ENCODE measurements at regions of chr18 and their contacts with region 1.

Region 1: DNA sequence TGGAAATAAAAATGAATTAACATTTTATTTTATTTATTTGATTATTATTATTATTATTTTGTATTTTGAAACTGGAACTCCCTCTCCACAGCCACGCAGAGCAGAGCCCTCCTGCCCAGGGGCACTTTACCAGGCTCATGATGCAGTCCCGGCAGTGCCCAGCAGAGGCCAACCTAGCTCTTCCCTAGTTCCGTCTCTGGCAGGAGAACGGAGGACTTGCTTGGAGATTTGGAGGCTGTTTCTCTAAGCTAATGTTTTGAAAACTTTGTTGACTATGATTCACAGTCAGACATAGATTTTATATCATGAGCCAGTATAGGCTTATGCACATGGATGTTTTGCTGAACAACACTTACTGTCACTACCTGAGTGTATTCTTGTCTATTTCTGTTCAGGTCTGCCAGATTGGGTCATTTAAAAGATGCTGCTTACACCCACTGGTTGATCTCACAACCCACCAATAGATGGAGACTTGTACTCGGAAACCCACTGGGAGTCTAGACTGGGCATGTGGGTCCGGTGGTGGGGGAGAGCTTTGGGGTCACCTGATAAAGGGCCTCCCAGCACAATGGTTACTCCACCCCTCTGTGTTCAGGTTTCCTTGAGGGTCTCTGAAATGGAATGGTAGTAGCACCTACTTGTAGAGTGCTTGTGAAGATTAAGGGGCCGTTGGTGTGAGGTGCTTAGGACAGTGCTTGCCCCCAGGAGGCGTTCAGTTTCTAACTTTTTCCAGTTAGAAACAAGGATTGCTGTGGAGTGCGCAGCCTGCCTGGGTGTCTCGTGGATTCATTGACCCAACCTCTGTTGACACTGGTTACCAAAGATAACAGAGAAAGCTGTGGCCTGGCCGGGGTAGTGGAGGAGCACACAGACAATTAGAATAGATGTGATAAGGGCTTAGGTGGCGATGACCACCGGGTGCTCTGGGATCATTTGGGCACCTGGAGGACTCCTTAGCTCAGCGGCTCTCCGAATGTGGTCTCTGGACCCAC is 177.3 kb downstream of the HAUS1 start:
- DNase-seq: peak in 4 of 6 donors; percentile 27 to 74 (median 54)
- ATAC-seq: peak; percentile 75 to 96 (median 95)
- H3K4me3 ChIP-seq: no peak overlapping the region
- H3K27ac ChIP-seq: no peak overlapping the region
- H3K4me1 ChIP-seq: no peaks in the 10 kb centered on the region
- H3K27me3 ChIP-seq: no peaks in the 10 kb centered on the region
- CTCF ChIP-seq: peak; percentile 59 to 88 (median 76)

Region 2: DNA sequence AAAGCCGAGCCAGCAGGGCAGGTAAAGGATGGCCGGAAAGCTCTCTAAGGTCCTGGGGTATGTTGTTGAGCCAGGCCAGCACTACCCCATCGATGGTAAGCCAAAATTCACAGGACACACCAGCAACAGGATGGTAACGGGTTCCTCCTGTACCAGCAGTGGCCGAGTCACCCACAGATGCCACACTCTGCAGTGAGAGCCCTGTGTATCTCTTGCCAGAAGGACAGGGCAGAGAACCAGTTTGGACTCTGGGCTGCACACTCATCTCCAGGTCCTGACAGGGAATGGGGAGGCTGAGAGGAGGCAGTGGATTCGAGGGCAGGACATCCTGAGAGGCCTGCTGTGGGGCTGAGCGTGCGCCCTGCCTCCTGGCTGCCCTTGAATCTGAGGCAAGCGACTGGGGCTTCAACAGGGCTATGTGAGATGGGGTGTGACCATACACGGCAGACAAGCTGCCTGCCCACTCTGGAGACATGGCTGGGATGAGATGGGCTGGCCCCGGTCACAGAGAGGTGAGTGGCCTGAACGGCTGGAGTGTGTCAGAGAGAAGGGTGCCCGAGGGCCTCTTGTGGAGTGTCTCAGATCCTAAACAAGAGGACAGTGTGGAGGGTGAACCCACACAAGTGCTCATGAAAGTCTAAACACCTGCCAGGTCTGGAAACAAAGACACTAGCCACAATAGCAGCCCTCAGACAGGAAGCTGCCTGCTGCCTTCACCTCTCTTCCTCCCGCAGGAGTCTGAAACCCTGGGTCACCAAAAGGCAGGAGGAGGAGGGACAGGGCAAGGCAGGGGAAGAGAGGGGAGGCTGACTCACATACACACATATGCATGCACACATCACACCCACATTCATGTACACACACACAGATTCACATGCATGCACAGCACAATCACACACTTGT is 193.3 kb after region 1 on chr18:
- intact Hi-C with region 1: loop called in 1 of 3 experiments (anchors 10 kb)
- DNase-seq: no peak
- ATAC-seq: no peak
- H3K4me3 ChIP-seq: no peak overlapping the region
- H3K27ac ChIP-seq: no peak overlapping the region
- H3K4me1 ChIP-seq: no peaks in the 10 kb centered on the region
- H3K27me3 ChIP-seq: no peaks in the 10 kb centered on the region
- CTCF ChIP-seq: no peak

Region 3: DNA sequence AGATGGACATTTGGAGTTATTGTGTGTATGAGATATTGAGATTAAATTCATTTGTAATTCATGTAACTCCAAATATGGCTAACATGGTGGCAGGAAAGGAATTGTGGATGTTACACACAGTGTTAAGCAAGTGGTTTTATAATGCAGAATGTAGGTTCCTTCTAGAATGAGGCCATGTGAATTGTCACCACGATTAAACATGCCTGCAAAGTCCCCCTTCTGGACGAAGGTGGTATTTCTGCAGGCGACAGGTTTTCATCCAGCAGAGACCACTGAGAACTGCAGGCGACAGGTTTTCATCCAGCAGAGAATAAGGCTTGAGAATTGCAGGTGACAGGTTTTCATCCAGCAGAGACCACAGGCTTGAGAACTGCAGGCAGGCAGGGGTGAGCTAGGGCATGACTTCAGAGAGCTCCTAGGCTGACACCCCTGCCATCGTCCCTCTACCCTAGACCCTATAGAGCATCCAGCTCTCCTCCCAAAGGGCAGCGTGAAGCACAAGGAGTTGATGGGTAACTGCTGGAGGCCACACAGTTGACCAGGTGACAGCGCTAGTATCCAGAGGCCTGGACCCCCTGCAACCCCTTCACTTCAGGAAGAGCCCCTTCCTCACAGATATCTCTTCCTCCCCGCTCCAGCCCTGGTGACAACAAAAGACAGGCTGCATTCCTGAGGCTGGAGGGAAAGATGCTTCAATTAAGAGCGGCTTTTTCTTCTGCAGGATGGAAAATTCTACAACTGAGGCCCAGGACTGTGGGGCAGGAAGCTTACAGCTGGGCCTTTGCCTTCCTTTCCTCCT is 199.8 kb after region 1 on chr18:
- intact Hi-C with region 1: loop called in 2 of 3 experiments (anchors 10 kb)
- DNase-seq: peak in 2 of 6 donors; percentile 6 to 45
- ATAC-seq: peak in 3 of 4 donors; percentile 56 to 70 (median 61)
- H3K4me3 ChIP-seq: no peak overlapping the region
- H3K27ac ChIP-seq: no peak overlapping the region
- H3K4me1 ChIP-seq: no peaks in the 10 kb centered on the region
- H3K27me3 ChIP-seq: no peaks in the 10 kb centered on the region
- CTCF ChIP-seq: peak; percentile 30 to 69 (median 60)

Region 4: DNA sequence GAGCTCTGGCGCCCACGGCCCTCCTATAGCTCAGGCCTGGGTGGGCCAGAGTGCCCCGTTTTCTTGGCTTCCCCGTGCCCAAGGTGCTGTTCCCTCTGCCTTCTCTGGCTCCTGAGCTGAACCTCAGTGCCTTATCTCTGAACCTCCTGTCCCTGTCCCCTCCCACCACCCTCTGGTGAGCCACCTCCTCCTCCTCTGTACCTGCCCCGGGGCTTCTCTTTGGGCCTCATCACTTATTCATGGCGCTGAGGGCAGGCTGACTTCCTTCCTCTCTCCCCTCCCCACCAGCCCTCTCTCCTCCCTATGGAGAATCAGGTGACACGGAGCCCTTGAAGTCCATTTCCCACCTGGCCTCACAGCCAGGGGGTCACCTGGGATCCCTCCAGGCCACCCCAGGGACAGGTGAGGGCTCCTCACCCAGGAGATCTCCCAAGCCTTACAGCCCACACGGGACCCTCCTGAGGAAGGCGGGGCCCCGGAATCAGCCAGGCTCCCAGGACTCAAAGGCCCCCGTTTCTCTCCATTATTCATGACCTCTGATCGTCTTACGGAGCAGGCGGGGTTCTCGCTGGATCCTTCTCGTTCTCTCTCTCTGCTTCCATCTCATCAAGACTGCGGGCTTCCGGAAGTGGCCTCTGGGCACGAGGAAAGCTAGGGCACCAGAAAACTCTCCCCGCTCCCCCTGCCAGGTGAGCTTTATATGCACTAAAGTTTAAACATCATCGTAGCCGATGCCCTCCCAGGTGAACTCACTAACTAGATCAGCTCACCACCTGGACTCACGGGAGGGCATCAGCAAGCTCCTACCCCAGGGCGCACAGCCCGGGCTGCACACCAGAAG is 375.9 kb after region 1 on chr18 and contains the start of gene LOXHD1:
- intact Hi-C with region 1: loop called in 1 of 3 experiments (anchors 10 kb)
- DNase-seq: peak in 1 of 6 donors; percentile 39
- ATAC-seq: no peak
- H3K4me3 ChIP-seq: no peak within 1 kb of the TSS
- H3K27ac ChIP-seq: no peak within 1 kb of the TSS
- H3K4me1 ChIP-seq: no peaks in the 10 kb centered on the region
- H3K27me3 ChIP-seq: no peaks in the 10 kb centered on the region
- CTCF ChIP-seq: no peak
- total RNA-seq, gene LOXHD1: 0.12 to 0.16 (median 0.15) TPM in 4 of 6 donors, not detected in the others

Measured in pancreas (tissue), 10 donors.